Left cardiac atrium (tissue), 4 donors: ENCODE measurements at regions of chr9 and their contacts with region 1.

Region 1: GRCh38 chr9:127943731-127944144 is 6.1 kb upstream of the DPM2 start:
- DNase-seq: peak; percentile 91
- ATAC-seq: peak; percentile 79 to 82

Region 2: DNA sequence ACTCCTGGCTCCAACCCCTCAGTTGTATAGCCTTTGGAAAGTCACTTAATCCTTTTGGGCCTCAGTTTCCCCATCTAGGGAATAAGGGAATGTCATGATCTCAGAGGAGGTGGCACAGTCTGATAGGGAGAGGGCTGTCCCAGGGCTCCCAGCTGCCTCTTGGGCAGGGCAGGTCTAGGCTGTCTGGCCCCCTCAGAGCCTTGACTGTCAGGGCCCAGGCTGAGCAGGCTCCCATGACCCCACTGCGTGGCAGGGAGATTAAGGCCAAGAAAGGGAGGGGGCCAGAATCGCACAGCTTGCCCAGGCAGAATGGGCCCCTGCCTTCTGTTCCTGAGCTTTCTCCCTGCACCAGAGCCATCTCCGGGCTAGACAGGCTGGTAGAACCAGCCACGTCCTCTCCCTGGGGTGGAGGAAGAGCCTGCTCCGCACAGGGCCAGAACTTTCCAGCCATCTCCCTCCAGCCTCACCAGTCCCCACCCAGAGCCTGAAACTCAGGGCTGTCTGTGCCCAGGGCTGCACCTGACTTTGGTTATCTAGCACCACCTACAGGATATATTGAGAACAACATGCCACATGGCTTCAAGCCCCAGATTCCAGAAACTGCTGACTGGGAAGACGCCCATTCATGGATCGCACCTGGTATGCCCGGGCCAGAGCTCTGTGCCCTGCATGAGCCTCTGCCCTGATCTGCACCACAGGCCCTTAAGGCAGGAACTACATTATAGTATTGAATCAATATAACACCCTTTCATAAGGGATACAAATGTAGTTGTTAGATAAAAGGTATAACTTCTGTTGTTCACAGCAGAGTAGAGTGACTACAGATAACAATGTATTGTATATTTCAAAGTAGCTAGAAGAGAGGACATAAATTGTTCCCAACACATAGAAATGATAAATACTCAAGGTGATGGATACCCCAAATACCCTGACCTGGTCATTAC is 91.4 kb after region 1 on chr9:
- intact Hi-C with region 1: loop called (anchors 1 to 2 kb)
- DNase-seq: peak; percentile 73
- ATAC-seq: peak; percentile 94 to 98

Region 3: DNA sequence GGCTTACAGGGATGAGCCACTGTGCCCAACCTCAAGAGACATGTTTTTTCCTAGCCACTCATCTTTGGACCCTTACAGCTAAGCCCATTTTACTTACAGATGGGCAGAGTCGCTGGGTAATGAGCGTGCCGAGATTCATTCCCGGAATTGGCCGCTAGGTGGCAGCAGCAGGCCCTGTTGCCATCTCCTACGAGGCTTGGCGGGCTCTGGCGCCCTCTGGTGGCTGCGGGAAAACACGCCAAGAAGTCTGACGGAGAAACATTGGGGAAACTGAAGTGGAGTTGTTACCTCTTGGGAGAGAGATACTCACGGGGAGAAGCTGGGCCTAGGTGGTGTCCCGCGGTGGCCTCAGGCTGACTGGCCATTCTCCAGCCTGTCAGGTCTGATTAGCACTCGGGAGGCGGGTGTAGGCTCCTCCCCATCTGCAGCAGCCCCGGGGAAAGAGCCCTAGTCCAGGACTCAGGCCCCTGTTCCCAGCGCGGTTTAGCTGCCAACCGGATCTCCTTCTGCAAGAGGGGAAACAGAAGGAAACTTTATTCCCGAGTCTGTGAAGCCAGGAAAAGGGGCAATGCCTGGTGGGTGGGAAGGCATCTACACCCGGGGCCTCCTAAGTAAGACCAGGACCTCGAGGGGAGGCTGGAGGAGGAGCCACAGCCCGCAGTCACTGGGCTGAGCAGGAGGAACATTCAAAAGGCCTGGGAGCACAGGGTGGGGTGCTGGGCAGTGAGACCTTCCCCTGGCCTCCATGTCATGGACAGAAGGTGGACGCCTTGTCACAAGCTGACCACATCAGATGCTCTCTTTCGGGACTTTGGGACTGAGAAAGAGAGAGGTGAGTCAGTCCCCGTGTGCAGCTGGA is 174.1 kb after region 1 on chr9:
- intact Hi-C with region 1: loop called (anchors 2 to 10 kb)
- DNase-seq: peak; percentile 94
- ATAC-seq: peak; percentile 61 to 72